Prostate gland (tissue), 2 donors: ENCODE measurements at regions of chr2 and their contacts with region 1.

Region 1: GRCh38 chr2:215920244-215921100 is 92.9 kb downstream of the MREG start:
- DNase-seq: peak; percentile 58
- H3K4me3 ChIP-seq: no peak overlapping the region
- H3K27ac ChIP-seq: no peak overlapping the region
- H3K4me1 ChIP-seq: no peaks in the 10 kb centered on the region
- H3K27me3 ChIP-seq: no peaks in the 10 kb centered on the region
- CTCF ChIP-seq: peak in 3 of 4 experiments; percentile 66 to 84 (median 73)
- POLR2A ChIP-seq: no peak

Region 2: DNA sequence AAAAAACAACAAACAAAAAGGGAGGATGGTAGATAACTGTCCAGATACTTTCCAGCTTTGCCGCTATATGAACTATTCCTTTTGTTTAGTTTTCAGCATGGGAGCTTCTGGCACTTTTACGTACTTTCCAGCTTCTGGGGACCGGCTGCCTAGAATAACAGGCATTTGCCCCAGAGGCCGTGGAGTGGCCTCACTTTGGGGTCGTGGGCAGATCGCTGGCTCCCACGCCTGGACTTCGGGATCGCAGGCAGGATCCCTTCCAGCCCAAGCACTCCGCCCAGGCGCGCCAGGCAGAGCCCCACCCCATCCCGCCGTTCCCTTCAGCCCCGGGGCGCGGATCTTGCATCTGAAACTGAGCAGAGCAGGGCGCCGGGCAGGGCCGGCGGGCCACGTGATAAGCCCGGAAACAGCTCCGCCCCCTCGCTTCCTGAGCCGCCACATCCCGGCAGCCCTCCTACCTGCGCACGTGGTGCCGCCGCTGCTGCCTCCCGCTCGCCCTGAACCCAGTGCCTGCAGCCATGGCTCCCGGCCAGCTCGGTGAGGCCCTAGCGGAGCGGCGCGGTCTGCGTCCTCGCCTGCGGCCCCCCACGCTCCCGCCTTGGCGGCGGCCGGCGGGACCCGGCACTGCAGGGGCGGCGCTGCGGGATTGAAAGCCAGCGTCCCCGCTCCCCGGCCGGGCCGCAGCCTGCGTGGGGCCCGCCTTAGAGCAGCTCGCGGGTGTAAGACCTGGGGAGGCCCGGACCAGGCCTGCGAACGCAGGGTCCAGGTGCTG is 608.7 kb before region 1 on chr2 and contains the start of gene ATIC:
- intact Hi-C with region 1: loop called (anchors 10 kb)
- DNase-seq: peak; percentile 95
- H3K4me3 ChIP-seq: peak within 1 kb of the TSS; percentile 70 to 73
- H3K27ac ChIP-seq: peak within 1 kb of the TSS; percentile 68 to 80
- H3K4me1 ChIP-seq: peaks cover 3% of the 10 kb centered on the region
- H3K27me3 ChIP-seq: no peaks in the 10 kb centered on the region
- CTCF ChIP-seq: peak in 2 of 4 experiments; percentile 43 to 45
- POLR2A ChIP-seq: peak; percentile 67
- total RNA-seq, gene ATIC: 23.7 to 46.6 TPM

Region 3: GRCh38 chr2:215454519-215455246 is 465.8 kb before region 1 on chr2:
- intact Hi-C with region 1: loop called (anchors 2 kb)
- DNase-seq: no peak
- H3K4me3 ChIP-seq: no peak overlapping the region
- H3K27ac ChIP-seq: no peak overlapping the region
- H3K4me1 ChIP-seq: no peaks in the 10 kb centered on the region
- H3K27me3 ChIP-seq: no peaks in the 10 kb centered on the region
- CTCF ChIP-seq: peak; percentile 72 to 81 (median 76)
- POLR2A ChIP-seq: no peak

Region 4: GRCh38 chr2:215657844-215658243 is 262.6 kb before region 1 on chr2:
- intact Hi-C with region 1: loop called (anchors 10 kb)
- DNase-seq: no peak
- H3K4me3 ChIP-seq: no peak overlapping the region
- H3K27ac ChIP-seq: no peak overlapping the region
- H3K4me1 ChIP-seq: no peaks in the 10 kb centered on the region
- H3K27me3 ChIP-seq: no peaks in the 10 kb centered on the region
- CTCF ChIP-seq: no peak
- POLR2A ChIP-seq: no peak

Region 5: DNA sequence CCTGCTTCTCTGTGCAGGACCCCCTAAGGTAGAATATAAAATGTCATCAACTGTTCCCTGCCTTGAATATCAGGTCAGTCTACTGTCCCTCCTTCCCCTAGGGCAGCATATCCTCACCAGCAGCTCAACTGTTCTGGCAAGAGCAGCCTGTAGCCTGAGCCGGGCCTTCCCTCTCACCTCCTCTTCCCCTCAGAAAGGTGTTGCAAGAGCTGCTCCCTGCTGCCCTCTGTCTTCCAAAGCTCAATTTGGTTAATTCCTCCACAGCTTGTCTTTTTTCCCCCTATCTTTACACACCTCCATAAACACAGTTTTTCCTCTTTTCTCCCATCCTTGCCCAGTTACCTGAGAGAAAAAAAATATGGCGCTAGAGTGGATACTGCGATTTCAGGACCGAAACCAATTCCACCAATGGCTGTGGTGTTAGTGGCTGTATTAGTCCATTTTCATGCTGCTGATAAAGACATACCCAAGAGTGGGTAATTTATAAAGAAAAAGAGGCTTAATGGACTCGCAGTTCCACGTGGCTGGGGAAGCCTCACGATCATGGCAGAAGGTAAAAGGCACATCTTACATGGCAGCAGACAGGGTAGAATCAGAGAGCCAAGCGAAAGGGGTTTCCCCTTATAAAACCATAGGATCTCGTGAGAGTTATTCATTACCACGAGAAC is 91.8 kb before region 1 on chr2:
- intact Hi-C with region 1: loop called (anchors 10 kb)
- DNase-seq: peak; percentile 25
- H3K4me3 ChIP-seq: no peak overlapping the region
- H3K27ac ChIP-seq: no peak overlapping the region
- H3K4me1 ChIP-seq: no peaks in the 10 kb centered on the region
- H3K27me3 ChIP-seq: no peaks in the 10 kb centered on the region
- CTCF ChIP-seq: peak in 3 of 4 experiments; percentile 42 to 56 (median 46)
- POLR2A ChIP-seq: no peak